Dorsolateral prefrontal cortex (tissue), 120 donors: ENCODE measurements at regions of chr10 and their contacts with region 1.

Region 1: DNA sequence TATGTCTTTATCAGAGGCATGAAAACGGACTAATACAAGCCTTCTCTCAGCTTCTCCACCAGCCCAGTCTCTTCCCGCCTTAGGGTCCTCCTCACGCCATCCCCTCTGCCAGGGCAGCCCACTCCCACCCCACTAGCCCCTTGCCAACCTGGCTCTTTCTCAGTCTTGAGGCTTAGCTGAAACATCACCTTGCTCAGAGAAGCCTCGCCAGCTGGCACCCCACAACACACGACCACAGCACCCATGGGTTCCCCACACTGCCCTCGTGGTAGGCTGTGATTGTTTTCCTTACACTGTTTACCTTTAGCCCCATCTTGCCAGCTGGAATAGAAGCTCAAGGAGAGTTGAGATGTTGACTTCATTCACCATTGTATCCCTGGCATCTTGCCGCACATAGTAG is 44.4 kb downstream of the GPAM start:
- DNase-seq: no peak
- H3K4me3 ChIP-seq: no peak overlapping the region
- H3K27ac ChIP-seq: no peak overlapping the region
- H3K27me3 ChIP-seq: no peaks in the 10 kb centered on the region
- CTCF ChIP-seq: no peak

Region 2: GRCh38 chr10:112314822-112315474 is 175.8 kb after region 1 on chr10:
- intact Hi-C with region 1: loop called in 1 of 2 experiments (anchors 2 kb)
- DNase-seq: peak; percentile 63 to 92 (median 81)
- H3K4me3 ChIP-seq: no peak overlapping the region
- H3K27ac ChIP-seq: no peak overlapping the region
- H3K27me3 ChIP-seq: peaks cover 0 to 11% (median 0%) of the 10 kb centered on the region in 45 donors
- CTCF ChIP-seq: peak; percentile 72 to 97 (median 90)

Region 3: GRCh38 chr10:112721080-112721698 is 582.0 kb after region 1 on chr10:
- intact Hi-C with region 1: no loop called
- DNase-seq: no peak
- H3K4me3 ChIP-seq: no peak overlapping the region
- H3K27ac ChIP-seq: no peak overlapping the region
- H3K27me3 ChIP-seq: no peaks in the 10 kb centered on the region
- CTCF ChIP-seq: peak in 55 of 56 donors; percentile 32 to 82 (median 65)